ENCODE measurements at regions of chr16 and their contacts with region 1.

Region 1: GRCh38 chr16:72198021-72198711 is 26.2 kb upstream of the PMFBP1 start:
- DNase-seq: peak in 1 of 2 donors; percentile 92
- H3K4me3 ChIP-seq: no peak overlapping the region
- H3K27ac ChIP-seq: no peak overlapping the region
- H3K4me1 ChIP-seq: peaks cover 0 to 8% (median 2%) of the 10 kb centered on the region in 4 donors
- H3K27me3 ChIP-seq: no peaks in the 10 kb centered on the region
- CTCF ChIP-seq: no peak
- EP300 ChIP-seq: no peak
- POLR2A ChIP-seq: no peak

Region 2: GRCh38 chr16:72162105-72162692 is 36.0 kb before region 1 on chr16:
- intact Hi-C with region 1: no loop called
- DNase-seq: peak in 1 of 2 donors; percentile 31
- H3K4me3 ChIP-seq: no peak overlapping the region
- H3K27ac ChIP-seq: no peak overlapping the region
- H3K4me1 ChIP-seq: peaks cover 0 to 3% (median 0%) of the 10 kb centered on the region in 4 donors
- H3K27me3 ChIP-seq: no peaks in the 10 kb centered on the region
- CTCF ChIP-seq: no peak
- EP300 ChIP-seq: no peak
- POLR2A ChIP-seq: no peak

Region 3: GRCh38 chr16:72256398-72257054 is 58.4 kb after region 1 on chr16:
- intact Hi-C with region 1: loop called (anchors 10 kb)
- DNase-seq: no peak
- H3K4me3 ChIP-seq: no peak overlapping the region
- H3K27ac ChIP-seq: no peak overlapping the region
- H3K4me1 ChIP-seq: no peaks in the 10 kb centered on the region
- H3K27me3 ChIP-seq: no peaks in the 10 kb centered on the region
- CTCF ChIP-seq: no peak
- EP300 ChIP-seq: no peak
- POLR2A ChIP-seq: no peak